ENCODE measurements at regions of chr14 and their contacts with region 1.

Region 1: DNA sequence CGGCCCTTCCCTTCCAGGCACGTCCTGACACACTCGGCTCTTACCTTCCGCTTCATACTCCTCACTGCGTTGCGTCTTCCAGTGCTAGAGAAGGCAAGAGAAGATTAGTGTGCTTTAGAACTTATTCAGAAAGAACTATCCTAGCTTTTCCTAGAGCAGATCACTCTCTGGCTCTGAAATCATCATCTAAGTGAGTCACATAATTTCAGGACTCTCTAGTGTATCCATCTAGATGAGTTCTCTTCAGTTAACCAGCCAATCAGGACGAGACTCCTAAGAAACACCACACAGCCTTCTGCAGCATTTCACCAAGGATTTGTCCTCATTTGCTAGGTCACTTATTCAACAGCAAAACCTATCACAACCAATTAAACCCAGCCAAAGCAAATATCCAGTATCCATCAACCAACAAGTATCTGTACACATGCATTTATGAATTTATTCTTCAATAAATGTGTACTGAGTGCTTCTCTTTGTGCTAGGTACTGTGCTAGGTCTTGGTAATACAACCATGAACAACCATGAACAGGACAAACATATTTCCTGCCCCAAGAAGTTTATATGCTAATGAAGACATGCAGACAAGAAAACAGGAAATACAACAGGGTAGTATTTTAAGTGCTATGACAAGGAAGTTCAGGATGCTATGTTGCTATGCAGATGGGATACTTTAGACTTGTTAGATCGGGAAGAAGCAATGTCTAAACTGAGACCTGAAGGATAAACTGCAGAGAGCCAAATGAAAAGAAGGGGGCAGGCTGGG is 52.1 kb downstream of the NIN start:
- DNase-seq: no peak
- ATAC-seq: no peak
- H3K4me3 ChIP-seq: no peak overlapping the region
- H3K27ac ChIP-seq: no peak overlapping the region; the same call in 1 of the 2 replicates
- H3K4me1 ChIP-seq: no peaks in the 10 kb centered on the region; the same call in 1 of the 2 replicates
- H3K27me3 ChIP-seq: no peaks in the 10 kb centered on the region
- CTCF ChIP-seq: no peak
- EP300 ChIP-seq: no peak
- POLR2A ChIP-seq: no peak
- RAD21 ChIP-seq: no peak

Region 2: GRCh38 chr14:50542941-50543418 is 235.9 kb before region 1 on chr14:
- CTCF ChIA-PET with region 1: interaction called, 23 read pairs
- POLR2A ChIA-PET with region 1: no interaction called
- RAD21 ChIA-PET with region 1: interaction called, 5 read pairs
- SMC1A ChIA-PET with region 1: interaction called, 38 read pairs
- in situ Hi-C with region 1: loop called (anchors 5 kb)
- intact Hi-C with region 1: loop called (anchors 2 kb)
- DNase-seq: no peak
- ATAC-seq: peak; percentile 94
- H3K4me3 ChIP-seq: no peak overlapping the region
- H3K27ac ChIP-seq: no peak overlapping the region
- H3K4me1 ChIP-seq: peaks cover 3% of the 10 kb centered on the region; the same call in 1 of the 2 replicates
- H3K27me3 ChIP-seq: no peaks in the 10 kb centered on the region
- CTCF ChIP-seq: peak; percentile 47 to 59 (median 52)
- EP300 ChIP-seq: no peak
- POLR2A ChIP-seq: no peak
- RAD21 ChIP-seq: peak; percentile 52

Region 3: DNA sequence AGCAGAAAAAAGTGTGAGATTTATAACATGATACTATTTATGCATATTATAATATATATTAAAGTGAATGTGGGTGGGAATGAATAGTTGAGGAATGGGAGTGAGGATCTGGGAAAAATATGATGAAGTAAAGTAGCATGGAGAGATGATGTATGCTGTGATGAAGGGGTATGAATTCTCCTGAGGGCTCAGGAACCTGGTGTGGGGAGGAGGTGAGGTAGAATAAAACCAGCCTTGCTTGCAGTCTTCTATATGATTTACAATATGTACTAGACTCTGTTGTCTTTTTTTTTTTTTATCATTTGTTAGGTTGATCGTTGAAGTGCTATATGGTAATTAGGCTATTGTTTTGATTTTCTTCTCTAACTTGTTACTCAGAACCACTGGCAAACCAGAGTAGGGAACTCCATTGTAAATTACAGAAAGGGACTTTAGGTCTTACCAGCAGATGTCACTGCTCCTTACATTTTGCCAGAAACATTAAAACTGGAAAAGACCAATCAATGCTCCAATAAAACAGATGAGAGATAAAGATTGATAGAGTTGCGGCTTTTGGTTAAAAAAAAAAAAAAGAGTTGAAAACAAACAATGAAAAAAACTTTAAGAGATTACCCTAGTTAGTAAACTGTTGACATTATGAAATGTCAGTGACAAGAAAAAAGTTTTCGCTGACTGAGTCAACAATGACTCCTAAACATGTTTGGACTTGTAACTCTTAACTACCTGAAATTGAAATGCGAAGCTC is 179.0 kb before region 1 on chr14:
- CTCF ChIA-PET with region 1: interaction called, 120 read pairs
- POLR2A ChIA-PET with region 1: no interaction called
- RAD21 ChIA-PET with region 1: interaction called, 57 read pairs
- SMC1A ChIA-PET with region 1: interaction called, 53 read pairs
- in situ Hi-C with region 1: loop called (anchors 5 kb)
- intact Hi-C with region 1: loop called (anchors 2 kb)
- DNase-seq: no peak
- ATAC-seq: peak; percentile 76
- H3K4me3 ChIP-seq: no peak overlapping the region
- H3K27ac ChIP-seq: no peak overlapping the region
- H3K4me1 ChIP-seq: no peaks in the 10 kb centered on the region
- H3K27me3 ChIP-seq: no peaks in the 10 kb centered on the region
- CTCF ChIP-seq: peak; percentile 49 to 67 (median 55); a peak in 5 of 6 replicates
- EP300 ChIP-seq: no peak
- POLR2A ChIP-seq: no peak
- RAD21 ChIP-seq: peak; percentile 79

Region 4: GRCh38 chr14:50792051-50792477 is 13.2 kb after region 1 on chr14:
- CTCF ChIA-PET with region 1: interaction called, 183 read pairs
- POLR2A ChIA-PET with region 1: interaction called, 3 read pairs
- RAD21 ChIA-PET with region 1: interaction called, 39 read pairs
- SMC1A ChIA-PET with region 1: interaction called, 60 read pairs
- in situ Hi-C with region 1: no loop called
- intact Hi-C with region 1: no loop called
- DNase-seq: no peak
- ATAC-seq: peak; percentile 37
- H3K4me3 ChIP-seq: peak overlapping the region; percentile 65
- H3K27ac ChIP-seq: peak overlapping the region; percentile 97
- H3K4me1 ChIP-seq: peaks cover 95% of the 10 kb centered on the region
- H3K27me3 ChIP-seq: no peaks in the 10 kb centered on the region
- CTCF ChIP-seq: no peak
- EP300 ChIP-seq: no peak
- POLR2A ChIP-seq: peak; percentile 33; the same call in 1 of the 2 replicates
- RAD21 ChIP-seq: no peak

Region 5: GRCh38 chr14:50839048-50839447 is 60.1 kb after region 1 on chr14:
- CTCF ChIA-PET with region 1: interaction called, 15 read pairs
- POLR2A ChIA-PET with region 1: no interaction called
- RAD21 ChIA-PET with region 1: no interaction called
- SMC1A ChIA-PET with region 1: no interaction called
- in situ Hi-C with region 1: no loop called
- intact Hi-C with region 1: no loop called
- DNase-seq: no peak
- ATAC-seq: peak; percentile 66
- H3K4me3 ChIP-seq: no peak overlapping the region
- H3K27ac ChIP-seq: no peak overlapping the region
- H3K4me1 ChIP-seq: peaks cover 20% of the 10 kb centered on the region
- H3K27me3 ChIP-seq: no peaks in the 10 kb centered on the region
- CTCF ChIP-seq: no peak
- EP300 ChIP-seq: no peak
- POLR2A ChIP-seq: no peak
- RAD21 ChIP-seq: no peak

Measured in GM12878 (cell line).